ENCODE measurements at regions of chr5 and their contacts with region 1.

Region 1: GRCh38 chr5:86880785-86881492 is 263.2 kb downstream of the COX7C start:
- DNase-seq: peak; percentile 18
- H3K4me3 Mint-ChIP-seq: no peak overlapping the region
- H3K27ac Mint-ChIP-seq: no peak overlapping the region
- H3K4me1 Mint-ChIP-seq: no peaks in the 10 kb centered on the region
- H3K27me3 Mint-ChIP-seq: no peaks in the 10 kb centered on the region

Region 2: DNA sequence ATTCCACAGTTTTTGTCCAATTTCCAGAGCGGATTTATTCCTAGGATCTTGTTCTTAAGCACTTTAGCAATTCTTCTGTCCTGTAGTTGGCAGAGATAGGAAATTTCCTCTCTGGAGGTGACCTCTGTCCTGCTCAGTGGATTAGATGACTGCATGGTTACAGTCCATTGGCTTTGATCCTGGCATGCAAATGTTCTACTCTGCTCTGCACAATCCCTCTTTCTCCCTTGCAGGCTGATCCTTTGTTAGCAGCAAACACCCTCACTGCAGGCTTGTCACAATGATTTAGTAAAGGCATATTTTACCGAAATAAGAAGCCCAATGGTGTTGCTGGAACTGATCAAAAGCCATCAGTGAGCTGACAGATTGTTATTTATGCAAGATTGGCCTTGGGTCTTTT is 19.4 kb before region 1 on chr5:
- intact Hi-C with region 1: no loop called
- DNase-seq: no peak
- H3K4me3 Mint-ChIP-seq: no peak overlapping the region
- H3K27ac Mint-ChIP-seq: no peak overlapping the region
- H3K4me1 Mint-ChIP-seq: no peaks in the 10 kb centered on the region
- H3K27me3 Mint-ChIP-seq: peaks cover 4% of the 10 kb centered on the region

Region 3: DNA sequence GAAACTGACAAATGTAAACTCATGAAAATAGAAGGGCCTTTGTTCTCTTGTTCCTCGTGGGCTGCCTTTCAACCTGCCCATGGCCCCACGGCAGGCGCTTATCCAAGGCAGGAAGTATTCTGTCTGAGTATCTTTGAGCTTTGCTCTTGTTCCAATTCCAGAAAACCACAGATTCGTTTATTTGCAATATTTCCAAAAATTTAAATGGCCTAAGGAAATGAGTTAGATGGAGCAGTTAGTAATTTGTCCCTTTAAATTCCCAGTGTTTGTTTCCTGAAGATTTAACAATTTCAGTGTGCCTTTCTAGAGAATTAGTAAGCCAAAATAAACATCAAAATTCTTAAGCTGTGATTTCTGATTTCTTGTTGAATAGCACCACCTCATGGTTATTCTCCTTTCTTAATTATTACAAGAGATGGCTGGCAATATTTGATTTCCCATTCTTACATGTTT is 87.4 kb after region 1 on chr5:
- intact Hi-C with region 1: loop called (anchors 1 kb)
- DNase-seq: no peak
- H3K4me3 Mint-ChIP-seq: no peak overlapping the region
- H3K27ac Mint-ChIP-seq: no peak overlapping the region
- H3K4me1 Mint-ChIP-seq: peaks cover 4% of the 10 kb centered on the region
- H3K27me3 Mint-ChIP-seq: peaks cover 36% of the 10 kb centered on the region

Measured in activated T-helper 2 cell treated with anti-CD3 and anti-CD28 coated beads, Interferon-gamma antibody, Interleukin-2, Interleukin-4, amounts not matched to agents 10 μg/mL and 5 μg/mL and 100 μg/mL, durations not matched to agents 14 hours and 24 hours and 36 hours (primary cell).